ENCODE measurements at regions of chr18 and their contacts with region 1.

Region 1: DNA sequence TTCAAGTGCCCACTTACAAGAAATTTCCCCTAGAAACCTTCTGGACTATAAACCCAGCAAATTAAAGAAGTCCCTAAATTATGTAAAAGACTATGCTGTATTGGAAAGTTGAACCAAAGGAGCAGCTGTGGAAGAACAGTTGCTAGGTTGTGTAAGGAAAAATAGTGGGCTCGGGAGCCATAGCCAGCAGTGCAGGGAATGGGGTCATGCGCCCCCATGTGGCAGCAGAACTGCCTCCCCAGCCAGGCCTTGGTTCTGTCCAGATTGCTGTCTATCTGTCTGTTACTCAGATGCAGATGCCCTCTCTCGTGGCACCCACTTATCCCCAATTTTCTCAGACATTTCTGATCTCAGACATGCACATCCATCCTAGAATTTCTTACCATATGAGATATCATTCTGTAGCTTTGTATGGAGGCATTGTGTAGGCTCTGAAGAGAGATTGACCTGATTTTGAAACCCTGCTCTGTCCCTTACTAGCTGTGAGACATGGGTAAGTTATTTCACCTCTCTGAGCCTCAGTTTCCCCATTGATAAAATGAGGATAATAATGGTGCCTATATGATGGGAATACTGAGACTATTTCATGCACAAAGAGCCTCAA is 258.3 kb downstream of the SS18 start:
- DNase-seq: peak; percentile 51
- H3K4me3 ChIP-seq: no peak overlapping the region
- H3K27ac ChIP-seq: no peak overlapping the region
- H3K4me1 ChIP-seq: no peaks in the 10 kb centered on the region
- H3K27me3 ChIP-seq: no peaks in the 10 kb centered on the region
- CTCF ChIP-seq: peak; percentile 78

Region 2: GRCh38 chr18:24543805-24544498 is 1288.2 kb before region 1 on chr18:
- CTCF ChIA-PET with region 1: no interaction called
- POLR2A ChIA-PET with region 1: no interaction called
- intact Hi-C with region 1: loop called (anchors 5 kb)
- DNase-seq: peak; percentile 27
- H3K4me3 ChIP-seq: no peak overlapping the region
- H3K27ac ChIP-seq: no peak overlapping the region
- H3K4me1 ChIP-seq: no peaks in the 10 kb centered on the region
- H3K27me3 ChIP-seq: no peaks in the 10 kb centered on the region
- CTCF ChIP-seq: peak; percentile 46

Region 3: GRCh38 chr18:24878289-24878688 is 953.8 kb before region 1 on chr18:
- CTCF ChIA-PET with region 1: no interaction called
- POLR2A ChIA-PET with region 1: no interaction called
- intact Hi-C with region 1: loop called (anchors 2 kb)
- DNase-seq: peak; percentile 18
- H3K4me3 ChIP-seq: no peak overlapping the region
- H3K27ac ChIP-seq: no peak overlapping the region
- H3K4me1 ChIP-seq: no peaks in the 10 kb centered on the region
- H3K27me3 ChIP-seq: no peaks in the 10 kb centered on the region
- CTCF ChIP-seq: peak; percentile 54